ENCODE measurements at regions of chr4 and their contacts with region 1.

Region 1: DNA sequence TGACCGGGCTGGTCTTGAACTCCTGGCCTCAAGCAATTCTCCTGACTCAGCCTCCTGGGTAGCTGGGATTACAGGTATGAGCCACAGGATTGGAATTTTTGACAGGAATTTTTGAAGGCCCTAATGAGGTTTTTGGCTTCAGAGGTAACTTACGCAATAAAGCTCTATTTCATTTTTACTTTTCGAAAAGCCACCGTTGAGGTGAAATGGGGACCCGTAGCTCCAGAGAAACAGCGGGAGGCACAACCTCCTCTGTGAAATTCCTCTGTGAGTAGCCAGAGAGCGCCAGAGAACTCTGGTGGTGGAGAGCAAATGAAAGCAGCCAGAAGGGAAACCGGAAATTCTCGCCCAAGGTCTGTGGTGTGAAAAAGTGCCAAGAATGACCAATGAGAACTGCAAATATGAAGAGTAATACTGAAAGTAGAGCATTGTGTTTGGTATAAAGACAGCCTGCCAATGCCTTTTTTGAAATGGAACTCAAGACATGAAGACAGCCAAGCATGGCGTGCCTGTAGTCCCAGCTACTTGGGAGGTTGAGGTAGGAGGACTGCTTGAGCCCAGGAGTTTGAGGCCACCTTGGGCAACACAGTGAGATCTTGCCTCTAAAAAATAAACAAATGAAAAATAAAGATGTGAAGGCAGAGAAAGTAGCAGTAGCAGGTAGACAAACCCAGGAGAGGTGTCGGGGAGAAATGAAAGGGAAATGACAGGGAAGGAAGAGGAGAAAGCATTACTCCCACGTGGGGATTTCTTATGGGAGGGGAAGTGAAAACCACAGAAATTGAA is 33.0 kb upstream of the TMEM131L start:
- DNase-seq: peak; percentile 89
- H3K4me3 Mint-ChIP-seq: peak overlapping the region; percentile 78
- H3K27ac Mint-ChIP-seq: peak overlapping the region; percentile 91
- H3K4me1 Mint-ChIP-seq: peaks cover 76% of the 10 kb centered on the region
- H3K27me3 Mint-ChIP-seq: no peaks in the 10 kb centered on the region

Region 2: GRCh38 chr4:153153339-153153871 is 279.8 kb before region 1 on chr4:
- CTCF ChIA-PET with region 1: no interaction called
- intact Hi-C with region 1: loop called (anchors 2 kb)
- DNase-seq: peak; percentile 91
- H3K4me3 Mint-ChIP-seq: peak overlapping the region; percentile 80
- H3K27ac Mint-ChIP-seq: peak overlapping the region; percentile 86
- H3K4me1 Mint-ChIP-seq: peaks cover 58% of the 10 kb centered on the region
- H3K27me3 Mint-ChIP-seq: no peaks in the 10 kb centered on the region

Region 3: GRCh38 chr4:153497988-153498967 is 65.1 kb after region 1 on chr4:
- CTCF ChIA-PET with region 1: interaction called, 5 read pairs
- intact Hi-C with region 1: loop called (anchors 2 kb)
- DNase-seq: peak; percentile 33
- H3K4me3 Mint-ChIP-seq: peak overlapping the region; percentile 70
- H3K27ac Mint-ChIP-seq: peak overlapping the region; percentile 98
- H3K4me1 Mint-ChIP-seq: peaks cover 91% of the 10 kb centered on the region
- H3K27me3 Mint-ChIP-seq: no peaks in the 10 kb centered on the region

Region 4: GRCh38 chr4:153521999-153522801 is 89.0 kb after region 1 on chr4:
- CTCF ChIA-PET with region 1: interaction called, 10 read pairs
- intact Hi-C with region 1: loop called (anchors 1 kb)
- DNase-seq: peak; percentile 74
- H3K4me3 Mint-ChIP-seq: peak overlapping the region; percentile 69
- H3K27ac Mint-ChIP-seq: peak overlapping the region; percentile 97
- H3K4me1 Mint-ChIP-seq: peaks cover 93% of the 10 kb centered on the region
- H3K27me3 Mint-ChIP-seq: no peaks in the 10 kb centered on the region

Region 5: GRCh38 chr4:153573881-153574802 is 141.0 kb after region 1 on chr4:
- CTCF ChIA-PET with region 1: interaction called, 18 read pairs
- intact Hi-C with region 1: loop called (anchors 1 kb)
- DNase-seq: peak; percentile 78
- H3K4me3 Mint-ChIP-seq: no peak overlapping the region
- H3K27ac Mint-ChIP-seq: peak overlapping the region; percentile 74
- H3K4me1 Mint-ChIP-seq: peaks cover 76% of the 10 kb centered on the region
- H3K27me3 Mint-ChIP-seq: no peaks in the 10 kb centered on the region